ENCODE measurements at regions of chr1 and their contacts with region 1.

Region 1: GRCh38 chr1:156456622-156457465 is 43.7 kb downstream of the MEF2D start:
- DNase-seq: peak; percentile 97
- ATAC-seq: peak; percentile 87
- H3K4me3 ChIP-seq: peak overlapping the region; percentile 61 to 65
- H3K27ac ChIP-seq: peak overlapping the region; percentile 98
- H3K4me1 ChIP-seq: peaks cover 13 to 28% of the 10 kb centered on the region in 2 experiments; a peak in 3 of 4 replicates
- H3K27me3 ChIP-seq: no peaks in the 10 kb centered on the region
- CTCF ChIP-seq: no peak
- POLR2A ChIP-seq: peak; percentile 54
- RAD21 ChIP-seq: no peak

Region 2: GRCh38 chr1:156480411-156481192 is 23.8 kb after region 1 on chr1:
- CTCF ChIA-PET with region 1: interaction called, 11 read pairs
- POLR2A ChIA-PET with region 1: no interaction called
- RAD21 ChIA-PET with region 1: no interaction called
- intact Hi-C with region 1: no loop called
- DNase-seq: no peak
- ATAC-seq: peak; percentile 86
- H3K4me3 ChIP-seq: no peak overlapping the region
- H3K27ac ChIP-seq: no peak overlapping the region
- H3K4me1 ChIP-seq: peaks cover 0 to 11% of the 10 kb centered on the region in 2 experiments; a peak in 2 of 4 replicates
- H3K27me3 ChIP-seq: no peaks in the 10 kb centered on the region
- CTCF ChIP-seq: peak; percentile 20 to 70 (median 70); a peak in 4 of 6 replicates
- POLR2A ChIP-seq: no peak
- RAD21 ChIP-seq: peak; percentile 46; the same call in 1 of the 2 replicates

Region 3: GRCh38 chr1:156500797-156501499 is 44.1 kb after region 1 on chr1:
- CTCF ChIA-PET with region 1: interaction called, 14 read pairs
- POLR2A ChIA-PET with region 1: interaction called, 10 read pairs
- RAD21 ChIA-PET with region 1: interaction called, 5 read pairs
- intact Hi-C with region 1: loop called (anchors 1 kb)
- DNase-seq: peak; percentile 86
- ATAC-seq: peak; percentile 76
- H3K4me3 ChIP-seq: peak overlapping the region; percentile 89 to 97
- H3K27ac ChIP-seq: peak overlapping the region; percentile 99
- H3K4me1 ChIP-seq: peaks cover 57 to 89% of the 10 kb centered on the region in 2 experiments
- H3K27me3 ChIP-seq: no peaks in the 10 kb centered on the region
- CTCF ChIP-seq: peak in 2 of 3 experiments; percentile 54 to 59; a peak in 4 of 6 replicates
- POLR2A ChIP-seq: no peak
- RAD21 ChIP-seq: no peak

Region 4: DNA sequence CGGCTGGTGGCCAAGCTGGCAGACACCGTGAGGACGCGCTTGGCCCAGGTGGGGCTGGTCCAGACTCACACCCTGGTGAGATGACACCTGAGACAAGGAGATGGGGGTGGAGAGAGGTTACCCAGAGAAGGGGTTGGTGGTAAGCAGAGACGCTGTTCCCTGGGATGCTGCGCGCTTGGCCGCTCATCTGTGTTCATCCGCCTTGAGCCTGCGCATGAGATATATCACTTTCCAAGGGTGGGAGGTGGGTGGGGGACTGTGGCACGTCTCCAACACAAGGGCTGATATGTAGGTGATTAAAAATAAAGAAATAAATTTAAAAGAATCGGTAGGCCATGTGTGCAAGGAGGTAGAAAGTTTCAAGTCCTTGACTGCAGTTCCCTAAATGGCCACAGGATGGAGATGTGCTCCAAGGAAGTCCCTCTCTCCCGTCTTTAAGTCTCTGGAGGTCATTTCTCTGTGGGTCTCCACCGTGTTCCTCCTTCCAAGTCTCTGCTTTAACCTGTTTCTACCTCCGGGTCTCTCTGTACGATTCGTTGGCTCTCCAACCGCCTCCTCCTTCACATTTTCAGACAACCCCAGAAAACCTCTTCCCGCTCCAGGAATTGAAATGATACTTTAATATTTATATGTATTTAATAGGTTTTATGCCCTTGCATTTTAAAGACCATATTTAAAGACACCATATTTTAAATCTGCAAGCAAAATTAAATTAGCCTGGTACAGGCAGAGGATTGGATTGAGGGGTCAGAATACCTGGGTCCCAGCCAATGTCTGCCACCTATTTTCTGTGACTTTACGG is 127.2 kb after region 1 on chr1:
- CTCF ChIA-PET with region 1: interaction called, 3 read pairs
- POLR2A ChIA-PET with region 1: no interaction called
- RAD21 ChIA-PET with region 1: no interaction called
- intact Hi-C with region 1: loop called (anchors 2 kb)
- DNase-seq: peak; percentile 83
- ATAC-seq: peak; percentile 61
- H3K4me3 ChIP-seq: no peak overlapping the region
- H3K27ac ChIP-seq: no peak overlapping the region
- H3K4me1 ChIP-seq: peaks cover 11 to 28% of the 10 kb centered on the region in 2 experiments
- H3K27me3 ChIP-seq: no peaks in the 10 kb centered on the region
- CTCF ChIP-seq: peak; percentile 84 to 94 (median 91)
- POLR2A ChIP-seq: no peak
- RAD21 ChIP-seq: peak; percentile 88

Region 5: GRCh38 chr1:156602557-156602993 is 145.7 kb after region 1 on chr1:
- CTCF ChIA-PET with region 1: no interaction called
- POLR2A ChIA-PET with region 1: no interaction called
- RAD21 ChIA-PET with region 1: no interaction called
- intact Hi-C with region 1: loop called (anchors 1 kb)
- DNase-seq: peak; percentile 43
- ATAC-seq: peak; percentile 48
- H3K4me3 ChIP-seq: peak overlapping the region; percentile 70 to 88
- H3K27ac ChIP-seq: peak overlapping the region; percentile 75
- H3K4me1 ChIP-seq: peaks cover 11 to 30% of the 10 kb centered on the region in 2 experiments
- H3K27me3 ChIP-seq: no peaks in the 10 kb centered on the region
- CTCF ChIP-seq: peak; percentile 45 to 70 (median 65); a peak in 5 of 6 replicates
- POLR2A ChIP-seq: peak; percentile 36
- RAD21 ChIP-seq: peak; percentile 58

Region 6: DNA sequence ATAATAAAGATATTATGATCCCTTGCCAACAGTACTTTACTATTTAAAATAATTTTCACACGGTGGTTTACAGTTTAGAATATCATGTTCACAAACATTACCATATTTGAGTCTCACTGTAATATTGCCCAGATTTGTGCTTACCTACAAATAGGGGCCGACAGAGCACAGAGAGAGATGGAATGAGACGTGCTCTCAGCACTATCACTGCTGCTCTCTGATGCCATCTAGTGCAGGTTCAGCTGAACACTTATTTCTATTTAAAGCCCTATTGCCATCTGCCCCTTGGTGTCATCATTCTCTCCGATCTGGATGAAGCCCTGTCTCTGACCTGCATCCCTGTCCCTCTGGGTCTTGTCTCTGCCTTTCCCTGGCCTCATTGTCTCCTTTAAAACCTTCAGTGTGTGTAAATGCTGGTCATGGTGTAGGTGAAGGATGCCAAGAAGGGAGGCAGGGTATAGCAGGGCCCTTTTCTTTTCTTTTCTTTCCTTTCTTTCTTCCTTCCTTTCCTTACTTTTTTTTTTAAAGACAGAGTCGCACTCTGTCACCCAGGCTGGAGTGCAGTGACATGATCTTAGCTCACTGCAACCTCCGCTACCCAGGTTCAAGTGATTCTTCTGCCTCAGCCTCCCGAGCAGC is 151.3 kb after region 1 on chr1:
- CTCF ChIA-PET with region 1: interaction called, 4 read pairs
- POLR2A ChIA-PET with region 1: interaction called, 3 read pairs
- RAD21 ChIA-PET with region 1: interaction called in 1 of 2 experiments, 5 read pairs
- intact Hi-C with region 1: loop called (anchors 2 kb)
- DNase-seq: peak; percentile 66
- ATAC-seq: peak; percentile 95
- H3K4me3 ChIP-seq: no peak overlapping the region
- H3K27ac ChIP-seq: no peak overlapping the region
- H3K4me1 ChIP-seq: peaks cover under 1 to 17% of the 10 kb centered on the region in 2 experiments; a peak in 3 of 4 replicates
- H3K27me3 ChIP-seq: no peaks in the 10 kb centered on the region
- CTCF ChIP-seq: peak; percentile 79 to 95 (median 80)
- POLR2A ChIP-seq: no peak
- RAD21 ChIP-seq: peak; percentile 88